Activated CD4-positive, alpha-beta T cell treated with anti-CD3 and anti-CD28 coated beads for 36 hours (primary cell): ENCODE measurements at regions of chr11 and their contacts with region 1.

Region 1: GRCh38 chr11:32435511-32435941 is at the start of gene WT1:
- DNase-seq: peak; percentile 21
- ATAC-seq: no peak
- H3K4me3 Mint-ChIP-seq: peak within 1 kb of the TSS; percentile 13
- H3K27ac Mint-ChIP-seq: no peak within 1 kb of the TSS
- H3K4me1 Mint-ChIP-seq: peaks cover 37% of the 10 kb centered on the region
- H3K27me3 Mint-ChIP-seq: peaks cover 78% of the 10 kb centered on the region
- total RNA-seq, gene WT1: not detected

Region 2: GRCh38 chr11:31804312-31805036 is 631.1 kb before region 1 on chr11:
- CTCF ChIA-PET with region 1: no interaction called
- POLR2A ChIA-PET with region 1: no interaction called
- intact Hi-C with region 1: loop called in 1 of 2 experiments (anchors 5 kb)
- DNase-seq: peak; percentile 30
- ATAC-seq: no peak
- H3K4me3 Mint-ChIP-seq: peak overlapping the region; percentile 39
- H3K27ac Mint-ChIP-seq: no peak overlapping the region
- H3K4me1 Mint-ChIP-seq: peaks cover 41% of the 10 kb centered on the region
- H3K27me3 Mint-ChIP-seq: peaks cover 82% of the 10 kb centered on the region

Region 3: GRCh38 chr11:33869481-33870422 is 1434.2 kb after region 1 on chr11:
- CTCF ChIA-PET with region 1: no interaction called
- POLR2A ChIA-PET with region 1: no interaction called
- intact Hi-C with region 1: no loop called
- DNase-seq: peak; percentile 35
- ATAC-seq: peak; percentile 74
- H3K4me3 Mint-ChIP-seq: peak overlapping the region; percentile 63
- H3K27ac Mint-ChIP-seq: no peak overlapping the region
- H3K4me1 Mint-ChIP-seq: peaks cover 9% of the 10 kb centered on the region
- H3K27me3 Mint-ChIP-seq: peaks cover 62% of the 10 kb centered on the region